ENCODE measurements at regions of chr17 and their contacts with region 1.

Region 1: DNA sequence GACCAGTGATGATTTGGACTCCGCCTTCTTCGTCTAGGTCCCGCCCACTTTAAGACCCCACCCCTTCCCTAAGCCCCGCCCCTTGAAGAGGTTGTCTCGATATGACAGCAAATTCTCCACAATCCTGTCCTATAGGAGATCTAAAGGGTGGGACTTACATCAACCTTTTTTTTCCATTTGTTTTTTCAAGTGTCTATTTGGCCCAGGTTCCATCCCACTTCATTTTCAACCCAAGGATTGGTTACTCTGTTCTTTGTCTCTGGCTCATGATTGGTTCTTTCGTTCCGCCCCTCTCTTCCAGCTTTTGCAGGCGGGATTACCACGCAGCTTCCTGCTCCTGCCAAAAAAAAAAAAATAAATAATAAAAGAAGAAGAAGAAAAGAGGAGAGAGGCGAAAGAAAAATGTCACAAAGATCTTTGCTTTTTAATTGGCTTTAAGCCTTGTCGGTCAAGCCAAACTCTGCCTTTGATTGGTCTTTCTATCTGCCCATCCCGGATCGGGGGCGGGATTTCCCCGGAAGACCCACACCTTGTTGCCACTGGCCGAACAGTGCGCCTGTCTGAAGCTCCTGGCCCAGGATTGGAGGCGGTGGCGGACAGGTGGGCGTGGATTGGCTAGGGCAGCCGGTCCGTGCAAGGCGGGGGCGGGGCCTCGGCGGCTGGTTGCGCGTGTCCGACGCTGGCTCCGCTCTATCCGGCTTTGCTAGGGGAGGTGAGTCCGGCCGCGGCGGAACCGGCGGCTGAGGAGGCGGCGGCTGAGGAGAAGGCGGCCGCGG is 1.2 kb upstream of the NLK start:
- DNase-seq: peak; percentile 99
- H3K4me3 Mint-ChIP-seq: peak overlapping the region; percentile 81
- H3K27ac Mint-ChIP-seq: peak overlapping the region; percentile 73
- H3K4me1 Mint-ChIP-seq: peaks cover 42% of the 10 kb centered on the region
- H3K27me3 Mint-ChIP-seq: no peaks in the 10 kb centered on the region

Region 2: GRCh38 chr17:27544350-27545131 is 496.7 kb before region 1 on chr17:
- CTCF ChIA-PET with region 1: no interaction called
- intact Hi-C with region 1: loop called (anchors 10 kb)
- DNase-seq: peak; percentile 92
- H3K4me3 Mint-ChIP-seq: peak overlapping the region; percentile 50
- H3K27ac Mint-ChIP-seq: peak overlapping the region; percentile 96
- H3K4me1 Mint-ChIP-seq: peaks cover 76% of the 10 kb centered on the region
- H3K27me3 Mint-ChIP-seq: no peaks in the 10 kb centered on the region

Region 3: DNA sequence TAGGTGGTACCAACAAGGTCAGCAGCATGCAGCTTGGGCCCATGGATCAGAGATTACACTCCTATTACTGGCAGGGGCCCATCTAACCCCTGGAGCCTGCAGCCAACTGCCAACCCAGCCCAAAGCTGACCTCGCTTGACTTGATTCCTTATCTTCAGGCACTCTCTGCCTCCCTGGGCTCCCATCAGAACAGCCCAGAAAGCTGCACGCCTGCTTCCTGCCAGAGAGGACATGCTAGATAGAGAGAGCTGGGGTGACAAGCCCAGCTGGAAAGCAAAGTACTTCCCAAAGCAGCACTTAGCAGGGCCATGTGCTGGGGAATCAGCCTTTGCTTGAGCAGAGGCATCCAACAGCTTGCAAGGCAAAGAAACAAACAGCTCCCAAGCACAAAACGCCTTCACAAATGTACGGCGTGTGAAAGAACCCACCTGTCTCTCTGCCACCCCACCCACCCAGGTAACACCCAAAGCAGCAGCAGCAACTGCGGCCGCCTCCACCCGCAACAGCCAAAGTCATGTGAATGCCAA is 73.0 kb before region 1 on chr17:
- CTCF ChIA-PET with region 1: no interaction called
- intact Hi-C with region 1: no loop called
- DNase-seq: no peak
- H3K4me3 Mint-ChIP-seq: no peak overlapping the region
- H3K27ac Mint-ChIP-seq: no peak overlapping the region
- H3K4me1 Mint-ChIP-seq: no peaks in the 10 kb centered on the region
- H3K27me3 Mint-ChIP-seq: no peaks in the 10 kb centered on the region

Region 4: DNA sequence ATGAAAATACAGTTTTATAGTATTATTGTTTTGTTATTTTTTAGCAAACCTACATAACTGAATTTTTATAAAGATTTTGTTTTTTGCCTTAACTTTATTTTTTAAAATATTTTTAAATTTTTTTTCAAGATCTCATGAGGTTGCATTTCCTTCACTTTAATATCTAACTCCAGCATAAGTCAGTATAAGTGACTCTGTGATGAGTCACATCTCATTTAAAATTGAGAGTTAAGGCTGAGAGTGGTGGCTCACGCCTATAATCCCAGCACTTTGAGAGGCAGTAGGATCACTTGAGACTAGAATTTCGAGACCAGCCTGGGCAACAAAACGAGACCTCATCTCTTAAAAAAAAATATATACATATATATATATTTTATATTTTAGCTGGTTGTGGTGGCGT is 45.3 kb after region 1 on chr17:
- CTCF ChIA-PET with region 1: no interaction called
- intact Hi-C with region 1: loop called (anchors 5 kb)
- DNase-seq: no peak
- H3K4me3 Mint-ChIP-seq: no peak overlapping the region
- H3K27ac Mint-ChIP-seq: no peak overlapping the region
- H3K4me1 Mint-ChIP-seq: peaks cover 18% of the 10 kb centered on the region
- H3K27me3 Mint-ChIP-seq: no peaks in the 10 kb centered on the region

Region 5: DNA sequence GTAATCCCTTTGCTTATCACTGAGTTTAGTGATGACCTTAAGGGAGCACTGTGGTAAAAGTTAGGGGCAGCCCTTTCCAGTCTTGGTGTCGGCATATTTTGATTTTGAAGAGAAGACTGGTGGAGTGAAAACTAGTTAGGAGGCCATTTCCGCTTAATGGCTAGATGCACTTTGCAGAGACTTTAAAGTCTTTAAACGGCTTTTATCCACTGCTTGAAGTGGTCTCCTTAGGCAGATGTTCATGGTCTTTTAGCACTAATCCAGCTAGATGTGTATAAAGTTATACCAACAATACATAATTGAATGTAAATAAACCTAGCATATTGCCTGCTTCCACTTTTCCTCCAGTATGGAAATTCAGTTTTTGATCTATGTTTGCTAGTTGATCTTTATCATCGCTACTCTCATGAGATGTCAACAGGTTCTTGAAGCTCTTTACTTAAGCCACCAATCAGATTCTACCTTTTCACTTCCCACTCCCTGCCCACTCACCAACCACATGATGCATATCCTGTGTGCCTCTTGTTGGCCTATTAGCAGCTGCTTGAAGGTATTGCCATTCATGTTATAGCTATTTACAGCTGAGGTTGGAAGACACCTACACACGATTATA is 133.2 kb after region 1 on chr17:
- CTCF ChIA-PET with region 1: no interaction called
- intact Hi-C with region 1: loop called (anchors 5 kb)
- DNase-seq: peak; percentile 64
- H3K4me3 Mint-ChIP-seq: no peak overlapping the region
- H3K27ac Mint-ChIP-seq: no peak overlapping the region
- H3K4me1 Mint-ChIP-seq: peaks cover 19% of the 10 kb centered on the region
- H3K27me3 Mint-ChIP-seq: no peaks in the 10 kb centered on the region

Region 6: DNA sequence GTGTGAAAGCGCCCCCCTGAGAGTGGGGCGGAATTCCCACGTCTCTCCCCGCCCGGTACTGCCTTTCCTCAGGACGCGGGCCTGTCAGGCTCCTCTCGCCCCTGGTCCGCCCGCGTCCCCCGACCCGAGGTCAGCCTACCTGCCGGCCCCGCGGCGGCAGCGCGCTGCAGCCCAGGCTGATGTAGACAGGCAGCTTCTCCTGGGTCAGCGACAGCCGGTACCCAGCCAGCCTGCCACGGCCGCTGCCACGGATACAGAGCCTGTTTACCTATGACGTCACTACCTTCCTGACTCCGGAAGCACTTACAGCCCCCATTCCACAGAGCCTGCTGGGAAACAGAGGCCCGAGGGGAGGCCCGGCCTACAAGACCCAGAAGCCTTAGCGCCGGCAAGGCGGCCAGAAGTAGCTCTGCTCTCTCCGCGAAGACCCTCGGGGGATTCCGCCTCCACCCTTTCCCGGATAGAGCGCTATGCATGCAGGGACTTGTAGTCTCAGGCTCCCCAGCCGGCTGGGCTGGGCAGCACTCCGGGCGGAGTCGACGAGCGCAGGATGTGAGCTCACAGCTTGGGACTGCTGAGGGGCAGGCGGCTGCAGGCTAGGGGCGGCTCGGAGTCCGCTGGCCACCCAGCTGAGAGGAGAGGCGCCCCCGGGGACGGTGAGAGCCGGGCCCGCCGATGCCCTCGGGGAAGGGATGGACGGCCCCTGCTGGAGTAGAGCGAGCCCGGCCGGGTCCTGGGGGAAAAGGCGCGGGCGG is 294.1 kb after region 1 on chr17 and contains the starts of genes IFT20 and TNFAIP1:
- CTCF ChIA-PET with region 1: no interaction called
- intact Hi-C with region 1: loop called (anchors 10 kb)
- DNase-seq: peak; percentile 99
- H3K4me3 Mint-ChIP-seq: peak within 1 kb of the TSS; percentile 95
- H3K27ac Mint-ChIP-seq: peak within 1 kb of the TSS; percentile 90
- H3K4me1 Mint-ChIP-seq: peaks cover 34% of the 10 kb centered on the region
- H3K27me3 Mint-ChIP-seq: no peaks in the 10 kb centered on the region
- total RNA-seq, gene IFT20: 17.9 to 18.1 TPM
- total RNA-seq, gene TNFAIP1: 18.6 to 18.7 TPM

Region 7: GRCh38 chr17:28598799-28599310 is 557.6 kb after region 1 on chr17 and contains the start of gene SPAG5:
- CTCF ChIA-PET with region 1: no interaction called
- intact Hi-C with region 1: loop called (anchors 1 kb)
- DNase-seq: peak; percentile 96
- H3K4me3 Mint-ChIP-seq: peak within 1 kb of the TSS; percentile 95
- H3K27ac Mint-ChIP-seq: peak within 1 kb of the TSS; percentile 94
- H3K4me1 Mint-ChIP-seq: peaks cover 15% of the 10 kb centered on the region
- H3K27me3 Mint-ChIP-seq: no peaks in the 10 kb centered on the region
- total RNA-seq, gene SPAG5: 210 to 216 TPM